SK-N-SH (cell line): ENCODE measurements at regions of chr17 and their contacts with region 1.

Region 1: DNA sequence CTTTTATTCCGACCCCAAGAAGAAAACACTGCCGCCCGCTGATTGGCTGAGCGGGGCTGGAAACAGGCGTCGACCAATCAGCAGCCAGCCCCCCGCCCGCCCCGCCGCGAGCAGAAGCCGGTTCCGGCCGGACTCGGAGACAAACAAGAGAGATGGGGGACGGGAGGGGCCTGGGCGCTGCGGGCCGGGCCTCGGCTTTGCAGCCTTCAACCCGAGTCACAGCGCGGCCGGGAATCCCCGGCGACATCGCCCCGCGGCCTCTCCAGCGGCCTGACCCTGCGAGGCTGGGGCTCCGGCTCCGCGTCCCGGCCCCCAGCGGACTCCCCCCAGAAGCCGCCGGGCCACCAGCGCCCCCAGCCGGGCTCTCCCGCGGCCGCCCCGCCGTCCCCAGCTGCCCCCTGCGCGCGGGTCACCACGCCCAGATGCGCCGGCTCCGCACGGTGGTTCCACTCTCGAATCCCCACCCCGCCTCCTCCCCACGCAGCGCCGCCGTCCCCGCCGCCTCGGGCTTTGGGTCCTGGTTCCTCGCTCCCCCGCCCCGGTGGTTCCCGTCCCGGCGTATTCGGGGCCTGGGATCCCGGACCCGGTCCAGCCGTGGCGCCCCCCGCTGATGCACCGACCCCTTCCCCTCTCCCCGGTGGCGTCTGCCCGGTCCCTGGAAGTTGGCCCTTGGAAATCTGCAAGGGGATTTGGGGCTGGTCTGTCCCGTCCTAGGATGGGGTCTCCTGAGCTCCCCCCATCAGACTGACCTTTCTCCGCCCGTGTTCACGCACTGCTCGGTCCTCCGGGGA is 417 bp upstream of the SLC43A2 start:
- DNase-seq: peak; percentile 99
- H3K4me3 ChIP-seq: peak overlapping the region; percentile 84 to 96
- H3K27ac ChIP-seq: peak overlapping the region; percentile 80 to 95
- H3K4me1 ChIP-seq: peaks cover 3 to 13% of the 10 kb centered on the region in 2 experiments; a peak in 2 of 4 replicates
- H3K27me3 ChIP-seq: no peaks in the 10 kb centered on the region
- CTCF ChIP-seq: peak; percentile 54
- EP300 ChIP-seq: peak in 1 of 2 experiments; percentile 50; a peak in 2 of 4 replicates
- RAD21 ChIP-seq: peak; percentile 22; the same call in 1 of the 2 replicates

Region 2: GRCh38 chr17:1495265-1495989 is 133.6 kb before region 1 on chr17:
- CTCF ChIA-PET with region 1: no interaction called
- POLR2A ChIA-PET with region 1: no interaction called
- DNase-seq: no peak
- H3K4me3 ChIP-seq: no peak overlapping the region
- H3K27ac ChIP-seq: peak overlapping the region in 1 of 2 experiments; percentile 48; a peak in 1 of 4 replicates
- H3K4me1 ChIP-seq: peaks cover 8 to 19% of the 10 kb centered on the region in 2 experiments; a peak in 3 of 4 replicates
- H3K27me3 ChIP-seq: no peaks in the 10 kb centered on the region
- CTCF ChIP-seq: no peak
- EP300 ChIP-seq: no peak
- RAD21 ChIP-seq: no peak

Region 3: DNA sequence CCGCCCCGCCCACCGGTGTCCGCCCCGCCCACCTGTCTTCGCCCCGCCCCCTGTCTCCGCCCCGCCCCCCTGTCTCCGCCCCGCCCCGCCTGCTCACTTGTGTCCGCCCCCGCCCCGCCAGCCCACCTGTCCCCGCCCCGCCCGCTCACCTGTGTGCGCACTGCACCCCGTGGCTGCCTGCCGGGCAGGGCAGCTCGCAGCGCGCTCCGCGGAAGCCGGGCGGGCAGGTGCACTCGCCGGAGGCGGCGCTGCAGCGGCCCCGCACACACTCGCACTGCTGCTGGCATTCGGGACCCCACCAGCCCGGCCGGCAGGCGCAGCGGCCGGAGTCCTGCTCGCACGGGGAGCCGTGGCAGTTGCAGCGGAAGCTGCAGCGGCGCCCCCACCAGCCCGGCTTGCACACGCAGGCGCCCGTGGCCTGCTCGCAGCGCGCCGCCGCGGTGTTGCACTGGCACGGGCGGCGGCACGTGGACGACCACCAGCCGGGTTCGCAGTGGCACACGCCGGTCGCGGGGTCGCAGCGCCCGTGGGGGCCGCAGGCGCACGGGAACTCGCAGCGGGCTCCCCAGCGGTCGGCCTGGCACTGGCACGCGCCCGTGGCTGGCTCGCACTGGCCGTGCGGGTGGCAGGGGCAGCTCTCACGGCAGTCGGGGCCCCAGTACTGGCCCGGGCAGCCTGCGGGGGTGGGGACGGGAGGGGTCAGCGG is 14.4 kb after region 1 on chr17:
- CTCF ChIA-PET with region 1: interaction called, 29 read pairs
- POLR2A ChIA-PET with region 1: interaction called, 12 read pairs
- DNase-seq: peak; percentile 89
- H3K4me3 ChIP-seq: peak overlapping the region in 1 of 2 experiments; percentile 46; a peak in 2 of 4 replicates
- H3K27ac ChIP-seq: no peak overlapping the region
- H3K4me1 ChIP-seq: peaks cover 13 to 28% of the 10 kb centered on the region in 2 experiments; a peak in 2 of 4 replicates
- H3K27me3 ChIP-seq: no peaks in the 10 kb centered on the region
- CTCF ChIP-seq: peak; percentile 19; the same call in 1 of the 2 replicates
- EP300 ChIP-seq: no peak
- RAD21 ChIP-seq: no peak

Region 4: GRCh38 chr17:1648963-1649843 is 20.2 kb after region 1 on chr17:
- CTCF ChIA-PET with region 1: interaction called, 29 read pairs
- POLR2A ChIA-PET with region 1: interaction called, 12 read pairs
- DNase-seq: peak; percentile 100
- H3K4me3 ChIP-seq: peak overlapping the region; percentile 57 to 74
- H3K27ac ChIP-seq: peak overlapping the region; percentile 64 to 86
- H3K4me1 ChIP-seq: peaks cover 9 to 16% of the 10 kb centered on the region in 2 experiments; a peak in 2 of 4 replicates
- H3K27me3 ChIP-seq: no peaks in the 10 kb centered on the region
- CTCF ChIP-seq: no peak
- EP300 ChIP-seq: 0 out of 4 replicates have a peak, but pooled peaks of 1 of the 2 experiments have one; percentile 21
- RAD21 ChIP-seq: no peak; the same call in 1 of the 2 replicates

Region 5: GRCh38 chr17:1661045-1661444 is 32.0 kb after region 1 on chr17:
- CTCF ChIA-PET with region 1: no interaction called
- POLR2A ChIA-PET with region 1: no interaction called
- DNase-seq: no peak
- H3K4me3 ChIP-seq: no peak overlapping the region
- H3K27ac ChIP-seq: no peak overlapping the region
- H3K4me1 ChIP-seq: no peaks in the 10 kb centered on the region
- H3K27me3 ChIP-seq: no peaks in the 10 kb centered on the region
- CTCF ChIP-seq: no peak
- EP300 ChIP-seq: no peak
- RAD21 ChIP-seq: no peak